Ascending aorta (tissue), 2 donors: ENCODE measurements at regions of chr7 and their contacts with region 1.

Region 1: GRCh38 chr7:41705109-41705901 is 2.4 kb upstream of the INHBA start:
- DNase-seq: peak; percentile 59 to 94
- H3K4me3 ChIP-seq: peak overlapping the region; percentile 60 to 65
- H3K27ac ChIP-seq: peak overlapping the region; percentile 83 to 88
- H3K4me1 ChIP-seq: peaks cover 0 to 22% of the 10 kb centered on the region in 2 donors
- H3K27me3 ChIP-seq: no peaks in the 10 kb centered on the region
- CTCF ChIP-seq: peak; percentile 62 to 80 (median 78)

Region 2: DNA sequence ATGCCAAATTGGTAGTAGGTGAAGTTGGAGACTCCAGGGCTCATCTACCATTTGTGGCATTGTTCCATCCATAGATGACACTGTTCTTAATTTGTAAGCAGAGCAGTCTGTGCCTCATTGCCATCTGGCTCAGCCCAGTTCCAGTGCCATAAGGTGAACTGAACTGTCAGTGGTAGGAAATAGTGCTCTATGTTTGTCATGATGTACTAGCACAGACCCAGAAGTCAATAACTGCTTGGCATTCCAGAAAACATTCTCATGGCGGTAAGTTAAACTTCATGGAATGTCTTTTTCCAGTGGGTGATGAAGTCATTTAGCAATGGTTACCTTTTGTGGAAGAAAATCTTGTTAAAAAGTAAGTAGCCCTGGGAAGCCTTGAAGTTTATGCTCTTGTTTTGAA is 1267.8 kb before region 1 on chr7:
- intact Hi-C with region 1: loop called (anchors 5 kb)
- DNase-seq: peak in 1 of 2 donors; percentile 83
- H3K4me3 ChIP-seq: no peak overlapping the region
- H3K27ac ChIP-seq: peak overlapping the region; percentile 81 to 88
- H3K4me1 ChIP-seq: peaks cover 0 to 20% of the 10 kb centered on the region in 2 donors
- H3K27me3 ChIP-seq: no peaks in the 10 kb centered on the region
- CTCF ChIP-seq: no peak

Region 3: DNA sequence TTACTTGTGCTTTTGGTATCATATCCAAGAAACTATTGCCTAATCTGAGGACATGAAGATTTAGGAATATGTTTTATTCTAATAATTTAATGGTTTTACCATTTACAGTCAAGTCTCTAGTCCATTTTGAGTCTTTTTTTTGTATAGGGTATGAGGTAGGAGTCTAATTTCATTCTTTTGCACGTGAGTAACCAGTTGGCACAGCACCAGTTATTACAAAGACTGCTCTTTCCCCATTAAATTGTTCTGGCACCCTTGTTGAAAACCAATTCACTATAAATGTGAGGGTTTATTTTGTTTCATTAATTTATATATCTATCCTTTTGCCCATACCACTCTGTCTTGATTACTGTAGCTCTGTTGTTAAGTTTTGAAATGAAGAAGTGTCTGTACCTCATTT is 1188.9 kb before region 1 on chr7:
- intact Hi-C with region 1: loop called (anchors 10 kb)
- DNase-seq: no peak
- H3K4me3 ChIP-seq: no peak overlapping the region
- H3K27ac ChIP-seq: peak overlapping the region in 1 of 2 donors; percentile 6
- H3K4me1 ChIP-seq: peaks cover 0 to 3% of the 10 kb centered on the region in 2 donors
- H3K27me3 ChIP-seq: no peaks in the 10 kb centered on the region
- CTCF ChIP-seq: no peak

Region 4: DNA sequence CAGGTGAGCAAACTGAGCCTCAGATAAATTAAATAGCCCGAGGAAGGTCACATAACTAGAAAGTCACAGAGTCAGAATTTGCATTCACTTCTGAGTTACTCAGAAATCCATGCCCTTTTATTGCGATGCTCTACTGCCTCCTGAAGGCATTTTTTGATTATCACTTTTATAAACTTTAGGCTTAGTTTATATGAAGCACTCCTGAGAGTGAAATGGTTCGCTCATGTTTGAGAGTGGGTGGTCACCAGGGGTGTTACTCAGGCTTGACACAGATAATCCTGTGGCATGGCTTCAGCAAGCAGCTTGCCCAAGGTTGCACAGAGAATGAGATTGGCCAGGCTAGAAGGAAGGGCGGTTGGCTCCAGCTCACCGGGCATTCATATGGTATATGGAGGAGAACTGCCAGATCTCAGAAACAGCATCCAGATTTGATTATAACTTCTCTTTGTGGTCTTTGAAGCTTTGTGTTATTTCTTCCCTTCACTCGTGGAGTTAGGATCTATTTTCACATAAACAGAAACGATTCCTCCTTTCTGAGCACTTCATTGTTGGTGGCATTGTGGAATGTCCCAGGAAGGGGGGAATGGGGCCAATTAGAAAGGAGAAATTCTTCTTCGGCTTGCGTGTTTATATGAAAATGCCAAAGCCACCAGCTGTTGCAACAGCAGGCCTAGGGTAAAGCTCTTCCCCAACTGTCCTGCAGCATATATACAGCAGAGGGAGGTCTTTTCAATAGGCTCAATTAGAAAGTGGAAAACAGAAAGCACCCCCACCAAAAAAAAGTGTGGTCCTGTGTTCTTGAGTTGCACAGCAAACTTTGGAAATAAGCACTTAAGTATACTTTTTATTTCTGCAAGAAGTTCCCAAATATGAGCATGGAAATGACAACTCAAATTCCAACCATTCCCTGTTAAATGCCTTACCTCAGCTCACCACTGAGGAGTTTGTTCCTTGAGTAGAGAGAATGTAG is 941.7 kb before region 1 on chr7:
- intact Hi-C with region 1: loop called (anchors 5 kb)
- DNase-seq: no peak
- H3K4me3 ChIP-seq: peak overlapping the region; percentile 2 to 44
- H3K27ac ChIP-seq: peak overlapping the region; percentile 57 to 58
- H3K4me1 ChIP-seq: peaks cover 0 to 15% of the 10 kb centered on the region in 2 donors
- H3K27me3 ChIP-seq: no peaks in the 10 kb centered on the region
- CTCF ChIP-seq: peak; percentile 9 to 37 (median 16)

Region 5: GRCh38 chr7:40918701-40919271 is 786.5 kb before region 1 on chr7:
- intact Hi-C with region 1: loop called (anchors 5 kb)
- DNase-seq: no peak
- H3K4me3 ChIP-seq: no peak overlapping the region
- H3K27ac ChIP-seq: peak overlapping the region; percentile 46 to 53
- H3K4me1 ChIP-seq: peaks cover 0 to 8% of the 10 kb centered on the region in 2 donors
- H3K27me3 ChIP-seq: no peaks in the 10 kb centered on the region
- CTCF ChIP-seq: no peak

Region 6: DNA sequence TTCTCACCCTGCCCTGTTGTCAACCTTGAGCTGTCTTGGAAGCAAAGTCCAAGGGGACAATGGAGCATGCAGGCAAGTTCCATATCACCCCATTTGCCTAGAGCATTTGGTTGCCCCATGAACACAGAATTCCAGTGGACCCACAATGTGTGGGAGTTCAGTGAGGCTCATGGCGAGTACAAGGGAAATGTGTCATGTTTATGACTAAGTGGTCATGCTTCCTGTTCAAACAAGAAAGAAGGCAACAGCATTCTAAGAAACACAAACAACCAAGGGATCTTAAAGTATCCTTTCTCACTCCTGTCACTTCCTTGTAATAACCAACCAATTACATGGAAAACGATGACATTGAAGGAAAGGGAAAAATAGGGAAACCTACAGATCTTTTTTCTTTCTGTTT is 515.4 kb before region 1 on chr7:
- intact Hi-C with region 1: loop called (anchors 5 kb)
- DNase-seq: peak in 1 of 2 donors; percentile 63
- H3K4me3 ChIP-seq: no peak overlapping the region
- H3K27ac ChIP-seq: peak overlapping the region; percentile 26 to 46
- H3K4me1 ChIP-seq: peaks cover 0 to 13% of the 10 kb centered on the region in 2 donors
- H3K27me3 ChIP-seq: no peaks in the 10 kb centered on the region
- CTCF ChIP-seq: no peak

Region 7: GRCh38 chr7:41459623-41460261 is 245.6 kb before region 1 on chr7:
- intact Hi-C with region 1: no loop called
- DNase-seq: no peak
- H3K4me3 ChIP-seq: no peak overlapping the region
- H3K27ac ChIP-seq: no peak overlapping the region
- H3K4me1 ChIP-seq: no peaks in the 10 kb centered on the region
- H3K27me3 ChIP-seq: no peaks in the 10 kb centered on the region
- CTCF ChIP-seq: no peak

Region 8: GRCh38 chr7:41755096-41755495 is 49.8 kb after region 1 on chr7:
- intact Hi-C with region 1: no loop called
- DNase-seq: no peak
- H3K4me3 ChIP-seq: no peak overlapping the region
- H3K27ac ChIP-seq: no peak overlapping the region
- H3K4me1 ChIP-seq: no peaks in the 10 kb centered on the region
- H3K27me3 ChIP-seq: no peaks in the 10 kb centered on the region
- CTCF ChIP-seq: no peak